Heart right ventricle (tissue), 16 donors: ENCODE measurements at regions of chr1 and their contacts with region 1.

Region 1: GRCh38 chr1:19179597-19180264 is 30.3 kb downstream of the UBR4 start:
- DNase-seq: no peak
- ATAC-seq: peak in 7 of 8 donors; percentile 44 to 74 (median 68)
- H3K4me3 ChIP-seq: no peak overlapping the region
- H3K27ac ChIP-seq: peak overlapping the region in 1 of 10 donors; percentile 13
- H3K4me1 ChIP-seq: peaks cover 0 to 11% (median 0%) of the 10 kb centered on the region in 9 donors
- H3K27me3 ChIP-seq: no peaks in the 10 kb centered on the region
- CTCF ChIP-seq: peak in 8 of 9 donors; percentile 16 to 58 (median 41)

Region 2: DNA sequence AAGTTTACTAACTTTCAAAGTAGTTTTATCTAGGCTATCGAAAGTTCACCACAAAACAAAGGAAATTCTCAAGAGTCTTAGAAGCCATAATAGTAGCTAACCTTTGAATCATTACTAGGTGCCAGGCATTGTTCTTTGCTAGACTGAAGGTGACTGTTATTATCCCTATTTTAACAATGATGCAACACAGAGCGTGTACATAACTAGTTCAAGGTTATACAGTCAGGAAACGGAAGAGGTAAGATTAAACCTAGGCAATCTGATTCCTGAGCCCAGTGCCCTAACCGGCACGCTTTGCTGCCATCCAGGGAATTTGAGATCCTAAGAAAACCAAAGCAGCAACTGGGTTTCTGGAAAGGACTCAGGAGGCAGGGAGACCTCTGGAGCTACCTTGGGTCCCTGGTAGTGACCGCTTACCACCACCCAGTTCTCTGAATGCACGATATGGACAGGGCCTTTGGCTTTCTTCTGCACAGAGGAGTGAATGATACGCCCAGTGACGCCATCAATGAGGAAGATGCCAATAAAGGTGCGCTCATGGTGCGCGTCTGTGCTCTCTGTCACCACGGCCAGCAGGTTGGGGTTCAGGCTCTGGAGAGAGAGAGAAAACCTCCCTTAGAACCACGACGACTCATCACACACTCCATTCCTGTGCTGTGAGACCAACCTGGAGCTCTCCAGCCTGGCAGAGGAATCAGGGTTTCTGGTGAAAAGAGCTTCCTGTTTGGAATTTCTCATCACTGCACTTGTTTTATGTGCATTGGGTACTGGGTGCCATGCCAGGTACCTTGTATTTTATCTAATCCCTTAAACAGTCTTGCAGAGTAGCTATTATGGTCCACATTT is 43.5 kb after region 1 on chr1:
- intact Hi-C with region 1: no loop called
- DNase-seq: no peak
- ATAC-seq: no peak
- H3K4me3 ChIP-seq: no peak overlapping the region
- H3K27ac ChIP-seq: no peak overlapping the region
- H3K4me1 ChIP-seq: peaks cover 0 to 24% (median 8%) of the 10 kb centered on the region in 9 donors
- H3K27me3 ChIP-seq: no peaks in the 10 kb centered on the region
- CTCF ChIP-seq: no peak

Region 3: GRCh38 chr1:19240673-19241538 is 61.2 kb after region 1 on chr1:
- intact Hi-C with region 1: loop called in 9 of 10 experiments (anchors 1 to 10 kb)
- DNase-seq: peak; percentile 33 to 51
- ATAC-seq: peak; percentile 80 to 94 (median 91)
- H3K4me3 ChIP-seq: no peak overlapping the region
- H3K27ac ChIP-seq: peak overlapping the region in 2 of 10 donors; percentile 47 to 48
- H3K4me1 ChIP-seq: peaks cover 0 to 15% (median 0%) of the 10 kb centered on the region in 9 donors
- H3K27me3 ChIP-seq: no peaks in the 10 kb centered on the region
- CTCF ChIP-seq: peak; percentile 85 to 98 (median 96)